ENCODE measurements at regions of chr19 and their contacts with region 1.

Region 1: GRCh38 chr19:1094975-1095701 is at the start of gene POLR2E:
- DNase-seq: peak; percentile 99
- ATAC-seq: peak; percentile 94
- total RNA-seq, gene POLR2E: 99.8 TPM

Region 2: DNA sequence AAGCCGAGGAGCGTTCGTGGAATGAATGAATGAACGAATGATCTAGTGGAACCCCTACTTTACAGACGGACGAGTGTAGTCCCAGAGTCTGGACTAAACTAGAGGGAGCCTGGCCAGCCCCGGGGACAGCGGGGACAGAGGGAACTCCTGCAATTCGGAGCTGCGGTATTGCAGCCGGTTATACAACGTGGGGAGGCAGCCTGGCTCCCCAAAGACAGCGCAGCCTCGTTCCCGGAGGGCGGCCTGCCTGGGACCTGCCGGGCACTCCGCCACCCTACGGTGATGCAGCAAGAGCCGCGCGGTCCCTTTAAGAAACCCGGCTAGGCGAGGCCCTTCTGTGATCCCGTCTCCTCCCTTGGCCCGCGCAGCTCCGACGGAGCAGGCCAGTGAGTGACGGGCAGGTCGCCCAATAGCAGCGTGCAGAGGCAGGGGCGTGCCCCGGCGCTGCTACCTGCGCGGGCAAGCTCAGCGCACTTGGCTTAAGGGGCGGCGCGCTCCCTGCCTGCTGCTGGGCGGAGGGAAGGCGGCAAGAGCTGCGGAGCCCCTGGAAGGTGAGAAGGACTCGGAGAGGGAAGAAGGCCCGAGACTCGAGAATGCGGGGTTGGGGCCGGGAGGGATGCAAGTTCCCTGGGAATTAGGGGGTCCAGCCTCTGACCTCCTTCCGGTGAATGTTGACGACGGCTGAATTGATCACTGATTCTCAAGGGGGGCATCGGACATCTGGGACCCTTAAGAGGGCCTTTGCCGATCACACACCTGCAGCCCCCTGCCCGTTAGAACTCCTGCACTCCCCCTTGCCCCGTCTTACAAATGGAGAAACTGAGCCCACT is 55.3 kb before region 1 on chr19 and contains the start of gene ABCA7:
- intact Hi-C with region 1: loop called (anchors 5 kb)
- DNase-seq: peak; percentile 98
- ATAC-seq: peak; percentile 94
- total RNA-seq, gene ABCA7: 17.3 TPM

Measured in sciatic nerve (tissue), 2 donors.